ENCODE measurements at regions of chr17 and their contacts with region 1.

Region 1: DNA sequence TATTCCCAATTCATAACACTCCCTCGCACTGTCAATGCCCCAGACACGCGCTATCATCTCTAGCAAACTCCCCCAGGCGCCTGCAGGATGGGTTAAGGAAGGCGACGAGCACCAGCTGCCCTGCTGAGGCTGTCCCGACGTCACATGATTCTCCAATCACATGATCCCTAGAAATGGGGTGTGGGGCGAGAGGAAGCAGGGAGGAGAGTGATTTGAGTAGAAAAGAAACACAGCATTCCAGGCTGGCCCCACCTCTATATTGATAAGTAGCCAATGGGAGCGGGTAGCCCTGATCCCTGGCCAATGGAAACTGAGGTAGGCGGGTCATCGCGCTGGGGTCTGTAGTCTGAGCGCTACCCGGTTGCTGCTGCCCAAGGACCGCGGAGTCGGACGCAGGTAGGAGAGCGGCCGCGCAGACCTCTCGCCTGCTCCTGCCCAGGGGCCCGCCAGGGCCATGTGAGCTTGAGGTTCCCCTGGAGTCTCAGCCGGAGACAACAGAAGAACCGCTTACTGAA is at the start of gene GRN:
- DNase-seq: peak; percentile 99
- ATAC-seq: peak; percentile 98
- H3K4me3 ChIP-seq: peak within 1 kb of the TSS; percentile 74 to 97
- H3K27ac ChIP-seq: peak within 1 kb of the TSS; percentile 67
- H3K4me1 ChIP-seq: peaks cover 4 to 18% of the 10 kb centered on the region in 2 experiments; a peak in 3 of 4 replicates
- H3K27me3 ChIP-seq: no peaks in the 10 kb centered on the region
- CTCF ChIP-seq: no peak
- POLR2A ChIP-seq: peak; percentile 76
- RAD21 ChIP-seq: no peak
- total RNA-seq, gene GRN: 206 TPM

Region 2: DNA sequence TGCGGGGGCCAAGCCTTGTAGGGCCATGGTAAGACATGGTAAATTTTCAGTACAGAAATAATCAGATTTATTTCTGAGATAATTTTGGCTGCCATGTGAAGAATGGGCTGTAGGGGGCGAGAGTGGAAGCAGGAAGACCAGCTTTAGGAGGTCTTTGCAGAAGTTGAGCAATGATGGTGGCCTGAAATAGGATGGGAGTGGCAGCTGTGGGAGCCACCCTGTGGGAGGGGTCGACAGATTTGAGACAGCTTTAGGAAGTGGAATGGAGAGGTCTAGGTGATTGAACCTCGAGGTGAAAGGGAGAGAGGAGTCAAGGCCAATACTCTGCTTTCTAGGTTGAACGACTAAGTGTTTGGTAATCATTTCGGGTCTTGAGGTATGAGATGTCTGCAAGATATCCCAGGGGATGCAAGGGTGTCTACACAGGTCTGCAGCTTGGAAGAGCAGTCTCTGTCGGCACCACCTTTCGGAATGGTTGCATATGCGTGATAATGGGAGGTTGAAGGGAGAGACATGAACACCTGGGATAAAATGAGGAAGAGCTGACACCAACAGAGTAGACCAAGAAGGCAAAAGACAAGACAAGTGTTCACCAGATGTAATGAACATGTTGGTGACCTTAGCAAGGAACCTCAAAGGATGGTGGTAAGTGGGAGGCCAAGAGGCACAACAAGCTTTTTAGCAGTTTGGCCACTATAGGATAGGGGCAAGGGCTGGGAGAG is 141.1 kb before region 1 on chr17:
- CTCF ChIA-PET with region 1: interaction called, 19 read pairs
- POLR2A ChIA-PET with region 1: interaction called, 3 read pairs
- RAD21 ChIA-PET with region 1: no interaction called
- intact Hi-C with region 1: no loop called
- DNase-seq: no peak
- ATAC-seq: no peak
- H3K4me3 ChIP-seq: peak overlapping the region in 1 of 2 experiments; percentile 10; a peak in 1 of 4 replicates
- H3K27ac ChIP-seq: peak overlapping the region; percentile 71
- H3K4me1 ChIP-seq: peaks cover 44 to 66% of the 10 kb centered on the region in 2 experiments
- H3K27me3 ChIP-seq: no peaks in the 10 kb centered on the region
- CTCF ChIP-seq: peak; percentile 49 to 82 (median 75); a peak in 5 of 6 replicates
- POLR2A ChIP-seq: no peak
- RAD21 ChIP-seq: peak; percentile 55

Region 3: GRCh38 chr17:44210342-44211192 is 134.4 kb before region 1 on chr17:
- CTCF ChIA-PET with region 1: interaction called, 19 read pairs
- POLR2A ChIA-PET with region 1: interaction called, 5 read pairs
- RAD21 ChIA-PET with region 1: interaction called in 1 of 2 experiments, 3 read pairs
- intact Hi-C with region 1: no loop called
- DNase-seq: peak; percentile 63
- ATAC-seq: peak; percentile 88
- H3K4me3 ChIP-seq: 0 out of 4 replicates have a peak overlapping the region, but pooled peaks of 1 of the 2 experiments have one; percentile 2
- H3K27ac ChIP-seq: peak overlapping the region; percentile 42
- H3K4me1 ChIP-seq: peaks cover 19 to 49% of the 10 kb centered on the region in 2 experiments
- H3K27me3 ChIP-seq: no peaks in the 10 kb centered on the region
- CTCF ChIP-seq: peak; percentile 90 to 99 (median 99)
- POLR2A ChIP-seq: no peak
- RAD21 ChIP-seq: peak; percentile 99

Region 4: GRCh38 chr17:44308320-44308818 is 36.6 kb before region 1 on chr17 and contains the start of gene RUNDC3A:
- CTCF ChIA-PET with region 1: no interaction called
- POLR2A ChIA-PET with region 1: no interaction called
- RAD21 ChIA-PET with region 1: no interaction called
- intact Hi-C with region 1: no loop called
- DNase-seq: peak; percentile 36
- ATAC-seq: peak; percentile 94
- H3K4me3 ChIP-seq: peak within 1 kb of the TSS; percentile 28 to 34; a peak in 2 of 4 replicates
- H3K27ac ChIP-seq: no peak within 1 kb of the TSS
- H3K4me1 ChIP-seq: peaks cover 3 to 28% of the 10 kb centered on the region in 2 experiments; a peak in 3 of 4 replicates
- H3K27me3 ChIP-seq: no peaks in the 10 kb centered on the region
- CTCF ChIP-seq: no peak
- POLR2A ChIP-seq: no peak
- RAD21 ChIP-seq: no peak
- total RNA-seq, gene RUNDC3A: 0.61 TPM

Region 5: GRCh38 chr17:44363613-44364159 is 18.7 kb after region 1 on chr17 and contains the start of gene FAM171A2:
- CTCF ChIA-PET with region 1: interaction called, 12 read pairs
- POLR2A ChIA-PET with region 1: no interaction called
- RAD21 ChIA-PET with region 1: no interaction called
- intact Hi-C with region 1: no loop called
- DNase-seq: no peak
- ATAC-seq: peak; percentile 87
- H3K4me3 ChIP-seq: peak within 1 kb of the TSS; percentile 60 to 75
- H3K27ac ChIP-seq: peak within 1 kb of the TSS; percentile 72; the same call in 1 of the 2 replicates
- H3K4me1 ChIP-seq: peaks cover 7 to 27% of the 10 kb centered on the region in 2 experiments; a peak in 3 of 4 replicates
- H3K27me3 ChIP-seq: no peaks in the 10 kb centered on the region
- CTCF ChIP-seq: peak; percentile 26 to 56 (median 42); a peak in 5 of 6 replicates
- POLR2A ChIP-seq: no peak
- RAD21 ChIP-seq: no peak
- total RNA-seq, gene FAM171A2: 18.0 TPM